Activated CD4-positive, alpha-beta memory T cell treated with anti-CD3 and anti-CD28 coated beads for 36 hours (primary cell): ENCODE measurements at regions of chr4 and their contacts with region 1.

Region 1: GRCh38 chr4:94256828-94257227 is 49.2 kb downstream of the SMARCAD1 start:
- DNase-seq: no peak
- H3K4me3 Mint-ChIP-seq: no peak overlapping the region
- H3K27ac Mint-ChIP-seq: no peak overlapping the region
- H3K4me1 Mint-ChIP-seq: peaks cover 4% of the 10 kb centered on the region
- H3K27me3 Mint-ChIP-seq: no peaks in the 10 kb centered on the region

Region 2: GRCh38 chr4:93912146-93912545 is 344.7 kb before region 1 on chr4:
- CTCF ChIA-PET with region 1: no interaction called
- POLR2A ChIA-PET with region 1: no interaction called
- intact Hi-C with region 1: loop called (anchors 10 kb)
- DNase-seq: no peak
- H3K4me3 Mint-ChIP-seq: no peak overlapping the region
- H3K27ac Mint-ChIP-seq: no peak overlapping the region
- H3K4me1 Mint-ChIP-seq: no peaks in the 10 kb centered on the region
- H3K27me3 Mint-ChIP-seq: no peaks in the 10 kb centered on the region

Region 3: GRCh38 chr4:94207469-94208224 is 49.2 kb before region 1 on chr4 and contains the start of gene SMARCAD1:
- CTCF ChIA-PET with region 1: no interaction called
- POLR2A ChIA-PET with region 1: no interaction called
- intact Hi-C with region 1: loop called (anchors 2 kb)
- DNase-seq: peak; percentile 92
- H3K4me3 Mint-ChIP-seq: peak within 1 kb of the TSS; percentile 92
- H3K27ac Mint-ChIP-seq: peak within 1 kb of the TSS; percentile 99
- H3K4me1 Mint-ChIP-seq: peaks cover 33% of the 10 kb centered on the region
- H3K27me3 Mint-ChIP-seq: peaks cover 4% of the 10 kb centered on the region
- total RNA-seq, gene SMARCAD1: 26.5 to 28.0 TPM

Region 4: GRCh38 chr4:94235825-94236224 is 21.0 kb before region 1 on chr4:
- CTCF ChIA-PET with region 1: no interaction called
- POLR2A ChIA-PET with region 1: no interaction called
- intact Hi-C with region 1: no loop called
- DNase-seq: no peak
- H3K4me3 Mint-ChIP-seq: no peak overlapping the region
- H3K27ac Mint-ChIP-seq: no peak overlapping the region
- H3K4me1 Mint-ChIP-seq: no peaks in the 10 kb centered on the region
- H3K27me3 Mint-ChIP-seq: no peaks in the 10 kb centered on the region

Region 5: DNA sequence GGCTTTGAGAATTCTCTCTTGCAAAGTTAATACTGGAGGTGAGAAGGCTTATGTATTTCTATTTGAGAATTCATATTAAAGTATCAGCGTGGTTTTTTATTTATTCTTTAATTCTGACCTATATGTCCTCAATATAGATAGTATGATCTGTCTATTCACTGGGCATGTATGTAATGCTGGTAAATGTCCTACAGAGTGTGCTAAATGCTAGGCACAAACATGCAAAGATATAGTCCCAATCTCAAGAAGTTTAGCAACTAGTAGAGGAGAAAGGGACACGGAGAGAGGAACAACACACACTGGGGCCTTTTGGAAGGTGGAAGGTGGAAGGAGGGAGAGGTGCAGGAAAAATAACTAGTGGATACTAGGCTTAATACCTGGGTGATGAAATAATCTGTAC is 489.9 kb after region 1 on chr4:
- CTCF ChIA-PET with region 1: no interaction called
- POLR2A ChIA-PET with region 1: no interaction called
- intact Hi-C with region 1: no loop called
- DNase-seq: no peak
- H3K4me3 Mint-ChIP-seq: no peak overlapping the region
- H3K27ac Mint-ChIP-seq: no peak overlapping the region
- H3K4me1 Mint-ChIP-seq: no peaks in the 10 kb centered on the region
- H3K27me3 Mint-ChIP-seq: peaks cover 3% of the 10 kb centered on the region